MCF 10A (cell line): ENCODE measurements at regions of chr4 and their contacts with region 1.

Region 1: DNA sequence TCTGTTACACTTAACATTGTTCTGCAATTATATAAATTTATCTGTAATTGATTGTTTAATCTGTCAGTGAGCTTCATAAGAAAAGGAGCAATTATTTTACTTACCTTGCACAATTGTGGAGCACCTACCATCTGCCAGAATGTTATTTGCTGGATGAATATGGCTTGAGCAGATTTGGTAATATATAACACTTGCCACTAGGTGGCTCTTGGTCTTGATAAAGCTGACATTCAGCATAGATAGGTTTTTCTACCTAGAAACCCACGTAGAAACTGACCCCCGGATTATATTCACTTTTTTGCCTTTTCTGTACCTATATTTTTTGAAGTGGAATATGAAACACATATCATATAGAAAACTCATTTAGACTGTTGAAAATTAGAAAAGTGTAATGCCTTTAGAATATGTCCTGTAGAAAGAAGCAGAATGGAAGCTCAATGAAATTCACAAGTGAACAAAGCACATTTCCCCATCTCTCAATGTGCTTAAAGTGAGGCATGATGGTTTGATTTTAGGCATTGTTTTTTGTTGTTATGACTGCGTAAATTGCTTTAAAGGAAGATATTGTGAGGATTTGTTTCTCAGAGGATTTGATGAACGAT is 9.5 kb downstream of the RBPJ start:
- DNase-seq: peak; percentile 69
- H3K4me3 Mint-ChIP-seq: no peak overlapping the region
- H3K27ac Mint-ChIP-seq: no peak overlapping the region
- H3K4me1 Mint-ChIP-seq: peaks cover 32% of the 10 kb centered on the region
- H3K27me3 Mint-ChIP-seq: no peaks in the 10 kb centered on the region
- CTCF ChIP-seq: peak; percentile 54

Region 2: GRCh38 chr4:26061248-26061986 is 268.9 kb before region 1 on chr4:
- CTCF ChIA-PET with region 1: interaction called, 11 read pairs
- POLR2A ChIA-PET with region 1: no interaction called
- intact Hi-C with region 1: loop called (anchors 1 kb)
- DNase-seq: peak; percentile 78
- H3K4me3 Mint-ChIP-seq: no peak overlapping the region
- H3K27ac Mint-ChIP-seq: no peak overlapping the region
- H3K4me1 Mint-ChIP-seq: peaks cover 7% of the 10 kb centered on the region
- H3K27me3 Mint-ChIP-seq: no peaks in the 10 kb centered on the region
- CTCF ChIP-seq: peak; percentile 61

Region 3: GRCh38 chr4:26342328-26343037 is 12.2 kb after region 1 on chr4:
- CTCF ChIA-PET with region 1: interaction called, 51 read pairs
- POLR2A ChIA-PET with region 1: interaction called, 4 read pairs
- intact Hi-C with region 1: no loop called
- DNase-seq: peak; percentile 59
- H3K4me3 Mint-ChIP-seq: no peak overlapping the region
- H3K27ac Mint-ChIP-seq: peak overlapping the region; percentile 74
- H3K4me1 Mint-ChIP-seq: peaks cover 30% of the 10 kb centered on the region
- H3K27me3 Mint-ChIP-seq: no peaks in the 10 kb centered on the region
- CTCF ChIP-seq: no peak

Region 4: DNA sequence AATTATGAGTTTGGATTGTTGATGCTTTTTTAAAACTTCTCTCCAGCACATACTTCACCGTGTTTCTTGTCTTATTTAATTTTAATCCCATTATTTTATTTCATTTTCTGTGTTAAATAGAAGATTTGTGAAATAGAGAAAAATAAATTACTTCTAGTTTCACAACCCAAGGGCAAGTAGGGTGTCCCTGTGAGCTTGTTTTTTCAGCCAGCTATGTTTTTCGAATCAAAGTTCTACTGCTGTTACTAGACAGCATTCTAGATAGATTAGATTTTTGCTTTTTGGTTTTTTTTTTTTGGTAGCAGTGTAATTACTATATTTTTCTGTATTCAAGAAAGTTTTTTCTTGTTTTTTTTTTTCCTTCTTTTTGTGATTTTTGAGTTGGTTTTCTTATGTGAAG is 50.5 kb after region 1 on chr4:
- CTCF ChIA-PET with region 1: interaction called, 15 read pairs
- POLR2A ChIA-PET with region 1: no interaction called
- intact Hi-C with region 1: no loop called
- DNase-seq: no peak
- H3K4me3 Mint-ChIP-seq: no peak overlapping the region
- H3K27ac Mint-ChIP-seq: no peak overlapping the region
- H3K4me1 Mint-ChIP-seq: no peaks in the 10 kb centered on the region
- H3K27me3 Mint-ChIP-seq: no peaks in the 10 kb centered on the region
- CTCF ChIP-seq: no peak

Region 5: GRCh38 chr4:26410385-26411293 is 80.4 kb after region 1 on chr4:
- CTCF ChIA-PET with region 1: interaction called, 157 read pairs
- POLR2A ChIA-PET with region 1: interaction called, 5 read pairs
- intact Hi-C with region 1: loop called (anchors 1 kb)
- DNase-seq: peak; percentile 63
- H3K4me3 Mint-ChIP-seq: no peak overlapping the region
- H3K27ac Mint-ChIP-seq: no peak overlapping the region
- H3K4me1 Mint-ChIP-seq: peaks cover 10% of the 10 kb centered on the region
- H3K27me3 Mint-ChIP-seq: no peaks in the 10 kb centered on the region
- CTCF ChIP-seq: peak; percentile 48

Region 6: DNA sequence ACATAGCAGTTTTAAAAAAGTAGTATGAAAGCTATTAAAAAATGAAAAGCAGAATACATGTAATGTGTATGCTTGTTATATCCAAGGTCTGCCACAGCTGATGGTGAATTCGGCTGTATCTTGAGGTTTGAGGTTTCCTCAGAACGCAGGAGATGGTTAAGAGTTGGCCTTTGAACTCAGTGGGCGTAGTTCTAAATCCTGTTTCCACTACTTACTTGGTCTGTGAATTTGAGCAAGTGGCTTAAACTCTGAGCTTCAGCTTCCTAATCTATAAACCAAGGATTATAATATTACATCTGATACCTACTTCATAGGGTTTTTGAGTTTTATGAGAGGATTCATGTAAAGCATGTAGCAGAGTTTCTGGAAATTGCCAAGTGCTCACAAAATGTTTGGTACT is 655.6 kb after region 1 on chr4:
- CTCF ChIA-PET with region 1: no interaction called
- POLR2A ChIA-PET with region 1: no interaction called
- intact Hi-C with region 1: no loop called
- DNase-seq: no peak
- H3K4me3 Mint-ChIP-seq: no peak overlapping the region
- H3K27ac Mint-ChIP-seq: no peak overlapping the region
- H3K4me1 Mint-ChIP-seq: no peaks in the 10 kb centered on the region
- H3K27me3 Mint-ChIP-seq: no peaks in the 10 kb centered on the region
- CTCF ChIP-seq: no peak

Region 7: DNA sequence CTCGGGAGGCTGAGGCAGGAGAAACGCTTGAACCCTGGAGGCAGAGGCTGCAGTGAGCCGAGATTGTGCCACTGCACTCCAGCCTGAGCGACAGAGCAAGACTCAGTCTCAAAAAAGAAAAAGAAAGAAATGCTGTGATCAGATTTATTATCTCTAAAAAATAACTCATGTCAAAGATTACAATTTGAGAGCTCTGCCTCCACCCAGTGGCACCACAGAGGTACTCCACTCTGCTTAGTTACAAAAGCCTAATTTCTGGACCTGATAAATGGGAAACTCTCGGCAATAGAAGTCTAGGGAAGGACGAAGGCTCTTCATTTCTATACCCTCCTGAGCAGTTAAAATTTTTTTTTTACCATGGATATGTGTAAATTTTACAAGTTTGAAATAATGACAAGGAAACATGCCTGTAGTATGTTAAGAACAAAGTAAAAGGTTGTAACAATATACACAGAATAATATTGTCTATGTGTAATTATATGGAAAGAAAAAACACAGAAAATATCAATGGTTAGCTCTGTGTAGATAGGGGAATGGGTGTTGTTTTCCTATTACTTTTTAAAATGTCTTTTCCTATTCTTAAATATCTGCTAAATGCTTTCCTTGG is 680.1 kb after region 1 on chr4:
- CTCF ChIA-PET with region 1: no interaction called
- POLR2A ChIA-PET with region 1: no interaction called
- intact Hi-C with region 1: loop called (anchors 5 kb)
- DNase-seq: peak; percentile 59
- H3K4me3 Mint-ChIP-seq: no peak overlapping the region
- H3K27ac Mint-ChIP-seq: peak overlapping the region; percentile 39
- H3K4me1 Mint-ChIP-seq: no peaks in the 10 kb centered on the region
- H3K27me3 Mint-ChIP-seq: no peaks in the 10 kb centered on the region
- CTCF ChIP-seq: peak; percentile 71